Activated naive CD4-positive, alpha-beta T cell treated with anti-CD3 and anti-CD28 coated beads for 36 hours (primary cell): ENCODE measurements at regions of chr13 and their contacts with region 1.

Region 1: DNA sequence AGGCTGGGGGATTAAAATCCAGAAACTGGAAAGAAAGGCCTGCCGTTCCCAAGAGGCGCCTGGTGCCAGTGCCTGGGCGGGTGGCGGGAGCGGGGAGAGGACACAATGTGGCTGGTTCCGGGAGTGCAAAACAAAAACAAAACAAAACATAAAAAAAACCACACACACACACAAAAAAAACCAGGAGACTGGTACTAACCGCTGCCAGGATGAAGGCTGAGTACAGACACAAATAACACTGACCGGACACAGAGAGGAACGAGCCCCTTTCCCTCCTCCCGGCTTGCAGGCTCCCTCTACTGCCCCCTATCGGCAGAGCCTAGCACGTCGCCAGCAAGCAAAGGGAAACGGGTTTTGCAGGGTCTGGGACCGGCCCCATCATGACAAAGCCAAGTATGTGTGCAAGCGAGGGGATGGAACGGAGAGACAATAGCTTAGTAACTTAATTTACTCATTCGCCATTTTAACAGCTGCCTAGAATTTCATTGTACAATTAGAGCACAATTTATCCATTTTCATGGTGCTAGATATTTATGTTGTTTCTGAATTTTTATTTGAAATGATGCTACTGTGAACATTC is 17.9 kb upstream of the ZDHHC20 start:
- DNase-seq: peak; percentile 91
- H3K4me3 Mint-ChIP-seq: peak overlapping the region; percentile 73
- H3K27ac Mint-ChIP-seq: peak overlapping the region; percentile 10
- H3K4me1 Mint-ChIP-seq: peaks cover 8% of the 10 kb centered on the region
- H3K27me3 Mint-ChIP-seq: no peaks in the 10 kb centered on the region

Region 2: DNA sequence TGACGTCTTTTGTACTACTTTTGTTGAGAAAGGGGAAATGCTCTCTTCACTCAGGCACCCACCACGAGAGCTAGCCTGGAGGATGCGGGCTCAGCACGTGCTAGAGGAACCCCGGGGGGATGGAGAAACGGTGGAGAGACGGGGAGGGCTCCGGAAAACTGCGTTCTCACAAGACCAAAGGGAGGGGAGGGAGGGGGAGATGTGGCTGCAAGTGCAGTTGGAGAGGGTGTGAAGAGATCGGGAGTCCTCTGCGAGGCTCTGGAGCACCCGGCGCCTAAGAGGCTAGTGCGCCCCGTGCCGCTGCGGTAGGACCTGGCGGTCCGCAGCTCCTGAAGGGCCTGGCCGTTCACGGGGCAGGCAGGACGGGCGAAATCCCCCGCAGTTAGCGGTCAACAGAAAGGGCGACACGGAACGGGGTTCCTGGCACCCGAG is 531.0 kb before region 1 on chr13:
- CTCF ChIA-PET with region 1: interaction called, 10 read pairs
- intact Hi-C with region 1: loop called (anchors 1 kb)
- DNase-seq: peak; percentile 9
- H3K4me3 Mint-ChIP-seq: peak overlapping the region; percentile 21
- H3K27ac Mint-ChIP-seq: no peak overlapping the region
- H3K4me1 Mint-ChIP-seq: peaks cover 10% of the 10 kb centered on the region
- H3K27me3 Mint-ChIP-seq: peaks cover 44% of the 10 kb centered on the region

Region 3: GRCh38 chr13:21181671-21182070 is 295.3 kb before region 1 on chr13:
- CTCF ChIA-PET with region 1: interaction called, 10 read pairs
- intact Hi-C with region 1: loop called (anchors 2 kb)
- DNase-seq: no peak
- H3K4me3 Mint-ChIP-seq: no peak overlapping the region
- H3K27ac Mint-ChIP-seq: no peak overlapping the region
- H3K4me1 Mint-ChIP-seq: peaks cover 11% of the 10 kb centered on the region
- H3K27me3 Mint-ChIP-seq: no peaks in the 10 kb centered on the region

Region 4: DNA sequence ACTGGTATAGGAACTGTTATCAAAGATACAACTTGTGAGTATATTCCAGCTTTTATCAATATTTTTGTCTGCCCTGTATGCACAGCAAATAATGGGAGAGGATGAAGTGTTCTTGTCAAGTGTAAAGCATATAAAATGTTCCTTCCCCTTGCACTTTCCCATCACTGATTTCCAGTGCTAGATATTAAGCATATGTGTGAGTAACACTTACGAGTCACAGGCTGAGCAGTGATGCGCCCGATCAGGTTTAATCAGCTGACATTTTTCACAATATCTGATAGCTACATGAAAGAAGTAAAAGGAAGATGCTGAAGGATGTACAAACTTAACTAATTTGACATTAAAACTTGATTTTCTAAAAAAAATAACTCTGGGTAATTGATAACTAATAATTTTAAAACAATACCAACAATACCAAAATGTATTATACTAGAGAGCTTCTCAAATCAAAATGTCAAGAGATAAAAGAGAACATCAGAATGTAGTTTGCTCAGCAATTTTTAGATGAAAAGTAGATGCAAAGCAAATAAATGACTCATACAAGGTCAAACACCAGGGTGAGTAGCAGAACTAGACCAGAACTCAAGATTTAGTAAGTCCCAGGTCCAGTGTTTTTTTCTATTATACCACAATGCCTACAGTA is 74.3 kb before region 1 on chr13:
- CTCF ChIA-PET with region 1: interaction called, 10 read pairs
- intact Hi-C with region 1: no loop called
- DNase-seq: peak; percentile 43
- H3K4me3 Mint-ChIP-seq: no peak overlapping the region
- H3K27ac Mint-ChIP-seq: no peak overlapping the region
- H3K4me1 Mint-ChIP-seq: peaks cover 46% of the 10 kb centered on the region
- H3K27me3 Mint-ChIP-seq: no peaks in the 10 kb centered on the region

Region 5: GRCh38 chr13:21458813-21459701 is 17.9 kb before region 1 on chr13 and contains the start of gene ZDHHC20:
- CTCF ChIA-PET with region 1: interaction called, 14 read pairs
- intact Hi-C with region 1: loop called (anchors 1 kb)
- DNase-seq: peak; percentile 89
- H3K4me3 Mint-ChIP-seq: peak within 1 kb of the TSS; percentile 92
- H3K27ac Mint-ChIP-seq: peak within 1 kb of the TSS; percentile 88
- H3K4me1 Mint-ChIP-seq: peaks cover 29% of the 10 kb centered on the region
- H3K27me3 Mint-ChIP-seq: no peaks in the 10 kb centered on the region
- total RNA-seq, gene ZDHHC20: 48.0 to 50.7 TPM